ENCODE measurements at regions of chr1 and their contacts with region 1.

Region 1: DNA sequence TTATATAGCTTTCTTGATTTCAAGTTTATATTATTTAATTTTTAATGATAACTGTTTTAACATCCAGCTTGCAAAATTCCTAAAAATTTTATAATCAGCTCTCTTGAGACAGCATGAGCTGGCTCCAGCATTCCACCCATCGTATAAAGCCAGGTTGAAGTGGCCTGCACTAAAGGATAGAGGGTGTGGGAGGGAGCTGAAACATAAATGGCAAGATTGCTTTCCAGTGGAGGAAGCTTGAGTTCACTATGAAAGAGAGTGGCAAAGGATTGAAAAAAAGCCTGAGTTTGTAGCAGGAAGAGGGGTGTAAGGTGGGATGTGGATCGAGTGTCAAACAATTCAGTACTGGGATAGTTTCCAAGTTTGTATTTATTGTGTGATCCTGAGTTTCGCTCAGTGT is 48.5 kb upstream of the ZNF644 start:
- DNase-seq: no peak
- H3K4me3 ChIP-seq: no peak overlapping the region
- H3K27ac ChIP-seq: no peak overlapping the region
- H3K4me1 ChIP-seq: no peaks in the 10 kb centered on the region
- CTCF ChIP-seq: no peak

Region 2: GRCh38 chr1:91054780-91055481 is 15.4 kb before region 1 on chr1:
- CTCF ChIA-PET with region 1: no interaction called
- POLR2A ChIA-PET with region 1: interaction called, 11 read pairs
- intact Hi-C with region 1: no loop called
- DNase-seq: peak; percentile 76
- H3K4me3 ChIP-seq: peak overlapping the region; percentile 8
- H3K27ac ChIP-seq: peak overlapping the region; percentile 65
- H3K4me1 ChIP-seq: peaks cover 53% of the 10 kb centered on the region
- CTCF ChIP-seq: no peak

Region 3: GRCh38 chr1:91124989-91125417 is 54.7 kb after region 1 on chr1:
- CTCF ChIA-PET with region 1: no interaction called
- POLR2A ChIA-PET with region 1: no interaction called
- intact Hi-C with region 1: no loop called
- DNase-seq: no peak
- H3K4me3 ChIP-seq: no peak overlapping the region
- H3K27ac ChIP-seq: no peak overlapping the region
- H3K4me1 ChIP-seq: no peaks in the 10 kb centered on the region
- CTCF ChIP-seq: no peak